Activated CD8-positive, alpha-beta memory T cell treated with anti-CD3 and anti-CD28 coated beads, Interleukin-2, amount 10 ng/mL, durations not matched to agents 7 days and 5 days (primary cell): ENCODE measurements at regions of chr16 and their contacts with region 1.

Region 1: GRCh38 chr16:75234856-75235696 is 16.3 kb downstream of the CTRB1 start:
- DNase-seq: no peak
- ATAC-seq: no peak
- H3K4me3 Mint-ChIP-seq: no peak overlapping the region
- H3K27ac Mint-ChIP-seq: no peak overlapping the region
- H3K4me1 Mint-ChIP-seq: peaks cover 2% of the 10 kb centered on the region
- H3K27me3 Mint-ChIP-seq: peaks cover 5% of the 10 kb centered on the region

Region 2: DNA sequence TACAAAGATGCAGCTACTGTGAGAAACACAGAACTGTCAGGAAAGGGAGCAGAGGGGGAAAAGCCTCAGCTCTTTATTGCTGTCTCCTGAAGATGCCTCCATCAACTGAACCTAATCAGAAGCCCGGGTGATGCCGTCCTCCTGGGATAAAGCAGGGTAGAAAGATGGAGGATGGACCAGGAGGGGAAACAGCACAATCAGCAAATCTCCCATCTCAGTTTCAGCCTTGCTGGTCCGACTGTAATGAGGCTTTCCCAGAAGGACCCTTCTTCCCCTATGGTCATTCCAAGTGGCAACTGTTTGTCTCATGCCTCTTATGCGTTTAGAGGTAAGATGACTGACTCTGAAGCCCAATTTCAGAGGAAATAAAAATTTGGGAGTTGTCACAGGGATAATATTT is 62.5 kb before region 1 on chr16:
- CTCF ChIA-PET with region 1: no interaction called
- DNase-seq: no peak
- ATAC-seq: no peak
- H3K4me3 Mint-ChIP-seq: no peak overlapping the region
- H3K27ac Mint-ChIP-seq: no peak overlapping the region
- H3K4me1 Mint-ChIP-seq: no peaks in the 10 kb centered on the region
- H3K27me3 Mint-ChIP-seq: no peaks in the 10 kb centered on the region

Region 3: DNA sequence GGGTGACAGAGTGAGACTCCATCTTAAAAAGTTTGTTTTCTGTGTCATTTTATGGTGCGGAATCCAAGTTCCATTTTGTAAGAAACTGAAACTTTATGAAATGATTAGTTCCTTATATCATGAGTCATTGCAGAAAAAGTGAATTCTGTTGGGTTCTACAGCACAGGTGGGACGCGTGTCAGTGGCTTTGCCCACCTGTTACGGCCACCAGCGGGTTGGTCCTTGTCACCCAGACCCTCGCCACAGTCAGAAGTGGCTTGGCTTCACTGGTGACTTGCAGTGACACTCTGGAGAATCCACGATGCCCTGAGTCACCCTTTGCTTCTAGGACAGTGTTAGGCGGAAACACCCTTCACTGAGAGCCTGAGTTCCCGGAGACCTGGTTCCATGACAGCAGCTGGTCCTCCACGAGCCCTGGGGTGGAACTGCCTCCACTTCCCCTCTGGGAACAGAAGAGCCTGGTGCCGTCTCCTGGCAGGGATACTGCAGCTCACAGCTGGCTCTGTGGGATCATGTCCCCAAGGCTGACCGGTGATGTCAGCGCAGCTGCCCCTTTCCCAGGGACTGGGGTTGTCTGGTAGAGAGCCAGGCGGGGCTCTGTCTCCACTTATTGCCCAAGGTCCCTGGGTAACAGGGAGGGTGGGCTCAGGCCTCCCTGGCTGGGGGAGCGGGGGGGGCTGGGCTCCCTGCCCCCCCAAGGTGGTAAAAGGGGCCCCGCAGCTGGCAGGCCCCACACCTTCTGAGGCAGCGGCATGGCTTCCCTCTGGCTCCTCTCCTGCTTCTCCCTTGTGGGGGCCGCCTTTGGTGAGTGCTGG is 16.6 kb before region 1 on chr16 and contains the start of gene CTRB1:
- CTCF ChIA-PET with region 1: interaction called, 11 read pairs
- DNase-seq: no peak
- ATAC-seq: no peak
- H3K4me3 Mint-ChIP-seq: peak within 1 kb of the TSS; percentile 71
- H3K27ac Mint-ChIP-seq: peak within 1 kb of the TSS; percentile 89
- H3K4me1 Mint-ChIP-seq: peaks cover 14% of the 10 kb centered on the region
- H3K27me3 Mint-ChIP-seq: no peaks in the 10 kb centered on the region
- total RNA-seq, gene CTRB1: not detected

Region 4: DNA sequence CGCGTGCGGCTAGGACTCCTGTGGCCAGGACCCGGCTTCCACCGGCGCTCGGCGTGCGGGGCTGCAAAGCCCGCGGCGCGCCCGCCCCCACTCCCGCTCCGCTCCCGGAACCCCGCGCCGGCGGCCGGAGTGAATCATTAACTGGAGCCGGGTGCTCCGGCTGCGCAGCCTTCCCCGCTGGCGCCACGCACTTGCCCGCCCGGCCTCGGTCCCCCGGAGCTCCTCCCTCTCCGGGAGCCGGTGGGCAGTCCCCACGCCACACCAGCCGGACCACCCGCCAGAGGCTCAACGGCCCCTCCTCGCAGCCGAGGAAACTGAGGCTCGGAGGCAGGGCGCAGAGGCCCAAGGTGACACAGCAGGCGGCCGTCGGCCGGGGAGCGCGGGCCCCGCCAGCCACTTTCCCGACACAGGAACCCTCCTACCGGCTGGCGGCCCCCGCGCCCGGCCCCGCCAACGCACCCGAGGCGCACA is 15.8 kb after region 1 on chr16:
- CTCF ChIA-PET with region 1: interaction called, 11 read pairs
- DNase-seq: no peak
- ATAC-seq: no peak
- H3K4me3 Mint-ChIP-seq: no peak overlapping the region
- H3K27ac Mint-ChIP-seq: no peak overlapping the region
- H3K4me1 Mint-ChIP-seq: no peaks in the 10 kb centered on the region
- H3K27me3 Mint-ChIP-seq: peaks cover 59% of the 10 kb centered on the region

Region 5: GRCh38 chr16:75379911-75380847 is 145.1 kb after region 1 on chr16:
- CTCF ChIA-PET with region 1: interaction called, 75 read pairs
- DNase-seq: peak; percentile 67
- ATAC-seq: peak; percentile 60
- H3K4me3 Mint-ChIP-seq: peak overlapping the region; percentile 8
- H3K27ac Mint-ChIP-seq: peak overlapping the region; percentile 7
- H3K4me1 Mint-ChIP-seq: peaks cover 24% of the 10 kb centered on the region
- H3K27me3 Mint-ChIP-seq: peaks cover 43% of the 10 kb centered on the region

Region 6: DNA sequence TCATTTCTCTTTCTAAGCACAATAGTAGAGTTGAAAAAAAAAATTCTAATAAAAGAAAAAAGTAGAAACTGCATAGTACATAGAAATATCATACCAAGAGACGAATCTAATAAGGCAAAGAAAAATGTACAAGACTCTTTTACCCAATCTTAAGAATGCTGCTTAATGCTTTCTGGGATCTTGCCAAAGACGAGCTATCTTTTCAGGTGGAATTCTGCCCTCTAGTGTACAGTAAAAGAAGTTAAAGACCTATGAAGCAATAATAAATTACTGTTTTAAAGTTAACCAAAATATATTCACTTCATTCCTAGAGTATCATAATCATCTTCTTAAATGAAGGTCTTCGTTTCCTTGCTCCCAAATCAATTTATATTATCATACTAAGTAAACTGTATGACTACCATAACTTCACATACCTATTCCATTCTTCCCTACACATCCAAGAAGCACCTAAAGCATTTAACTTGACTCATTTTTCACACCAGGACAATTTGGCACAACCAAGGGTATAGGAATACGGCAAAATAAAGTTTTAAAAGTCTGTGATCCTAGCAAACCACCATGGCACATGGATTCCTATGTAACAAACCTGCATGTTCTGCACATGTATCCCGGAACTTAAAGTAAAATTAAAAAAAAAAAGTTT is 150.6 kb after region 1 on chr16:
- CTCF ChIA-PET with region 1: interaction called, 75 read pairs
- DNase-seq: no peak
- ATAC-seq: peak; percentile 47
- H3K4me3 Mint-ChIP-seq: no peak overlapping the region
- H3K27ac Mint-ChIP-seq: no peak overlapping the region
- H3K4me1 Mint-ChIP-seq: peaks cover 5% of the 10 kb centered on the region
- H3K27me3 Mint-ChIP-seq: peaks cover 16% of the 10 kb centered on the region

Region 7: DNA sequence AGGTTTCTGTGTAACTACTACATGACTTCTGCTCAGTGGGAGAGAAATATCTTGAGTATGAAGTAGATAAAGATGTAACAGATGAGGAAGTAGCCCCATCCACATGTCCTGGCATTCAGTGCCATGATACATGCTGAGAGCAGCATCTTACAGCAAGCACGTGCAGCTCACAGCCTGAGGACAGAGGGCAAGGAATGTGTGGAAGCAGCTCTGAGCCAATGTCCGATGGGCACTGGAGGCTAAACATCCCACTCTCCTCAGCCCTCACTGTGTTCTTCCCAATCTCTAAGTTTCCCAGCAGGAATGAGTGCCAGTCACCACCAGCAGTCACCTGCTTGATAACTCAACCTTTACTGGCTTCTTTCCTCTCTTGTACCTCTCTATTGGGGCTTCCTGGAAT is 157.8 kb after region 1 on chr16:
- CTCF ChIA-PET with region 1: interaction called, 75 read pairs
- DNase-seq: no peak
- ATAC-seq: no peak
- H3K4me3 Mint-ChIP-seq: no peak overlapping the region
- H3K27ac Mint-ChIP-seq: no peak overlapping the region
- H3K4me1 Mint-ChIP-seq: no peaks in the 10 kb centered on the region
- H3K27me3 Mint-ChIP-seq: no peaks in the 10 kb centered on the region

Region 8: GRCh38 chr16:75402821-75403475 is 167.9 kb after region 1 on chr16:
- CTCF ChIA-PET with region 1: interaction called, 22 read pairs
- DNase-seq: no peak
- ATAC-seq: peak; percentile 64
- H3K4me3 Mint-ChIP-seq: no peak overlapping the region
- H3K27ac Mint-ChIP-seq: no peak overlapping the region
- H3K4me1 Mint-ChIP-seq: peaks cover 3% of the 10 kb centered on the region
- H3K27me3 Mint-ChIP-seq: no peaks in the 10 kb centered on the region